Endothelial cell of umbilical vein (primary cell): ENCODE measurements at regions of chr10 and their contacts with region 1.

Region 1: GRCh38 chr10:127853868-127854768 is 38.6 kb downstream of the CLRN3 start:
- DNase-seq: peak; percentile 63
- H3K4me3 ChIP-seq: no peak overlapping the region
- H3K27ac ChIP-seq: no peak overlapping the region
- H3K4me1 ChIP-seq: no peaks in the 10 kb centered on the region
- H3K27me3 ChIP-seq: no peaks in the 10 kb centered on the region
- CTCF ChIP-seq: peak; percentile 71 to 83
- POLR2A ChIP-seq: no peak

Region 2: DNA sequence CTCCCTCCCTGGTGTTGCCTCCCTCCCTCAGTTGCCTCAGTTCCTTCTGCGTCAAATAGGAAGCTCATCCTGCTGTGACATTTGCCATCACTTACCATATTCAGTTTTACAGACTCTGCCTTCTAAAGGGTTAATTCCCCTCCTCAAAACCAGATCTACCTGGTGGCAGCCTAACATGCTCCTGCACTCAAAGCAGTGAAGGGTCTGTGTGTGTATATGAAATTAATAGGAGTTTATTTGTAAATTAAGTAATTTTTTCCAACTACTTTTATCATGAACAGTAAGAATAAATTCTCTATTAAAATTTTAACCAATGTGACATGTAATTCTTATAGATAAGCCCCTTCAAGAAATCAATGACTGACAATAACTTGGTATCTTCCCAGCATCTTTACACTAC is 499.1 kb before region 1 on chr10:
- CTCF ChIA-PET with region 1: no interaction called
- POLR2A ChIA-PET with region 1: no interaction called
- dilution Hi-C with region 1: no loop called
- intact Hi-C with region 1: loop called (anchors 10 kb)
- DNase-seq: peak; percentile 27
- H3K4me3 ChIP-seq: no peak overlapping the region
- H3K27ac ChIP-seq: no peak overlapping the region
- H3K4me1 ChIP-seq: no peaks in the 10 kb centered on the region
- H3K27me3 ChIP-seq: no peaks in the 10 kb centered on the region
- CTCF ChIP-seq: peak; percentile 30
- POLR2A ChIP-seq: no peak

Region 3: DNA sequence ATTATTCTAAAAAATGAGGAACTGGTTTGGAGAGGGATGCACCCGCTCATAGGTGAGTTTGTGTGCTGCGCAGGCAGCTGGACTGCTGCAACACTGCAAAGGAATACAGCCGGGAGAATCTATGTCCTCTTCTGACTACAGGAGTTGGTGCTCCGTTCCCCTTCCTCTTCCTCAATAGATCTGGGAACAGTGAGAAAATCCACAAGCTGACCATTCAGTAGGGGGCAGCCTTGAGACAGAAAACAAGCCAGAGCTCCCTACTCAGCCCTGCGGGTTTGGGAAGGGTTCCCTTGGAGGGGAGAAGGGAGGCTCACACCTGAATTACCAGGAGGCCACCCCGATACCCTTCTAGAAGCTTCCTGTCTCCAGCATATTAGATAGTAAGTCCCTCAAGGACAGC is 204.5 kb before region 1 on chr10:
- CTCF ChIA-PET with region 1: interaction called, 29 read pairs
- POLR2A ChIA-PET with region 1: no interaction called
- dilution Hi-C with region 1: no loop called
- intact Hi-C with region 1: loop called (anchors 1 kb)
- DNase-seq: peak; percentile 4
- H3K4me3 ChIP-seq: no peak overlapping the region
- H3K27ac ChIP-seq: no peak overlapping the region
- H3K4me1 ChIP-seq: no peaks in the 10 kb centered on the region
- H3K27me3 ChIP-seq: no peaks in the 10 kb centered on the region
- CTCF ChIP-seq: peak; percentile 8 to 28
- POLR2A ChIP-seq: no peak

Region 4: DNA sequence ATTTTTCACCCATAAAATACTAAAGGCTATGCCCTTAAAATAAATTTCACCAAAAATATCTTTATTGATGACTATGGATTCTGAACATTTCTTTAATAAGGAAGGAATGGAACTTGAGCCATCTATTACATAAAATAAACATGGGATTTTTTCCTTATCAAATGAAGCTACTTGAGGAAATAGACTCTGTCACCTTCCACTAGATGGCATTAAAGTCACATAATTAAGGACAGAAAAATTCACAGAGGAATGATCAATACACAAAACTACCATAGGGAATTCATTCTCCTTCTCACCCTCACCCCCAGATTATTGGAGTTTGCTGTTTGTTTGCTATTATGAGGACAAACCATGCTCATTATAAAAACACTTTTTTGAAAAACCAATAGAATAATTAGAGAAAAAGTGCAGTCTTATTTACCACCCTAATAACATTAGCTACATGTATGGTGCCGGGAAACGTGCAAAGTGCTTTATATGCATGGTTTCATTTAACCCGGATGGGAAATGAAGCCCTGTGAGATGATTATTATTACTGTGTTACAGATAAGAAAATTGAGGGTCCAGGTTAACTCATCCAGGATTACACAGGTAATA is 138.2 kb before region 1 on chr10:
- CTCF ChIA-PET with region 1: interaction called, 67 read pairs
- POLR2A ChIA-PET with region 1: no interaction called
- dilution Hi-C with region 1: no loop called
- intact Hi-C with region 1: loop called (anchors 1 kb)
- DNase-seq: peak; percentile 25
- H3K4me3 ChIP-seq: no peak overlapping the region
- H3K27ac ChIP-seq: no peak overlapping the region
- H3K4me1 ChIP-seq: no peaks in the 10 kb centered on the region
- H3K27me3 ChIP-seq: no peaks in the 10 kb centered on the region
- CTCF ChIP-seq: peak in 1 of 2 donors; percentile 7
- POLR2A ChIP-seq: no peak

Region 5: GRCh38 chr10:127802608-127803007 is 51.5 kb before region 1 on chr10:
- CTCF ChIA-PET with region 1: no interaction called
- POLR2A ChIA-PET with region 1: no interaction called
- dilution Hi-C with region 1: no loop called
- intact Hi-C with region 1: no loop called
- DNase-seq: no peak
- H3K4me3 ChIP-seq: no peak overlapping the region
- H3K27ac ChIP-seq: no peak overlapping the region
- H3K4me1 ChIP-seq: no peaks in the 10 kb centered on the region
- H3K27me3 ChIP-seq: no peaks in the 10 kb centered on the region
- CTCF ChIP-seq: no peak
- POLR2A ChIP-seq: no peak